Activated CD4-positive, alpha-beta T cell treated with anti-CD3 and anti-CD28 coated beads, Interleukin-2, amount 10 ng/mL, durations not matched to agents 24 days and 14 days (primary cell): ENCODE measurements at regions of chr5 and their contacts with region 1.

Region 1: GRCh38 chr5:151223469-151224264 is at the start of gene CCDC69:
- DNase-seq: peak; percentile 88
- H3K4me3 Mint-ChIP-seq: peak within 1 kb of the TSS; percentile 84
- H3K27ac Mint-ChIP-seq: peak within 1 kb of the TSS; percentile 83
- H3K4me1 Mint-ChIP-seq: peaks cover 51% of the 10 kb centered on the region
- H3K27me3 Mint-ChIP-seq: no peaks in the 10 kb centered on the region
- total RNA-seq, gene CCDC69: 22.7 and 23.2 TPM in 2 replicates

Region 2: GRCh38 chr5:151174612-151175101 is 49.0 kb before region 1 on chr5:
- intact Hi-C with region 1: no loop called
- DNase-seq: no peak
- H3K4me3 Mint-ChIP-seq: no peak overlapping the region
- H3K27ac Mint-ChIP-seq: no peak overlapping the region
- H3K4me1 Mint-ChIP-seq: peaks cover 10% of the 10 kb centered on the region
- H3K27me3 Mint-ChIP-seq: no peaks in the 10 kb centered on the region

Region 3: GRCh38 chr5:151239237-151239861 is 15.7 kb after region 1 on chr5:
- intact Hi-C with region 1: loop called (anchors 2 kb)
- DNase-seq: peak; percentile 80
- H3K4me3 Mint-ChIP-seq: no peak overlapping the region
- H3K27ac Mint-ChIP-seq: no peak overlapping the region
- H3K4me1 Mint-ChIP-seq: peaks cover 21% of the 10 kb centered on the region
- H3K27me3 Mint-ChIP-seq: no peaks in the 10 kb centered on the region